ENCODE measurements at regions of chr7 and their contacts with region 1.

Region 1: DNA sequence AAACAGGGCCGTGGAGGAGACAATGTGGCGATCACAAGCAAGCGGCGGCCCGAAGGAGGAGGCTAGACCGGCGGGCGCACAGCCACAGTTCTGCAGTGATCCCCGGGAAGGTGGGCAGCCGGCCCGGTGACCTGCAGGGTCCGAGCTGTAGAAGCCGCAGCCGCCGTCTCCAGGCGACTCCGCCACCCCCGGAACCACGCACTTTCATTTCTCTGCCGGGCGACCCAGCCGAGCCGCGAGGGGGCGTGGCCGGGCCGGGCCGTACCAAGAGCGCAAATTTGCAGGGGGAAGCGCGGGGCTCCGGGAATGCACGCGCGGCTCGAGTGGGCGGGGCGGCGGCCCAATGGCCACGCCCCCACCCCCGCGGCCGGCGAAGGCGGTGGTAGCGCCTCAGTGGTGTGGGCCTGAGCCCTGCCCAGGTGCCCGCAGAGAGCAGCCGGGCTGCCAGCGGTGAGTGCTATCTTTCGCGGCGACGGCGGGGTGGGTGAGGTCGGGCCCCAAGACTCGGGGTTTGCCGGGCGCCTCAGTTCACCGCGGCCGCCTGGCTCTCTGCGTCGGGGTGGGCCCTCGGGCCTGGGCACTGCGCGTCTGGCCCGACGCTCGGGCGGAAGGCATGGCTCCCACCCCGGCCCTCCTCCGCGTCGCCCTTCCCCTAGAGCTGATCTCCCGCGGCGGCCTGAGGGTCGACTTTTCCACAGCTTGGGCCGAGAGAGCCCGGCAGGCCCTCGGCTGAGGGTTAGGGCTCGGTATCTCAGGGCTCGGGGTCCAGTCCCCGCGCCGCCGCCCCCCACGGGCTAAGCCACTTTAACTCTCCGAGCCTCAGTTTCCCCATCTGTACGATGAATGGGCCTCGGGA is at the start of gene POR:
- DNase-seq: peak; percentile 75 to 99
- H3K4me3 ChIP-seq: peak within 1 kb of the TSS; percentile 66 to 89 (median 74)
- H3K27ac ChIP-seq: peak within 1 kb of the TSS; percentile 27; the same call in 1 of the 2 replicates
- H3K4me1 ChIP-seq: peaks cover 0 to 12% (median 4%) of the 10 kb centered on the region in 4 experiments; a peak in 4 of 7 replicates
- H3K27me3 ChIP-seq: no peaks in the 10 kb centered on the region
- CTCF ChIP-seq: no peak
- EP300 ChIP-seq: peak in 1 of 2 experiments; percentile 100; a peak in 2 of 3 replicates
- POLR2A ChIP-seq: peak; percentile 100
- RAD21 ChIP-seq: peak in 1 of 2 experiments; percentile 7; a peak in 2 of 4 replicates
- total RNA-seq, gene POR: 127 and 144 TPM in 2 replicates

Region 2: GRCh38 chr7:75727881-75728592 is 186.9 kb before region 1 on chr7:
- CTCF ChIA-PET with region 1: no interaction called
- POLR2A ChIA-PET with region 1: no interaction called
- DNase-seq: peak in 1 of 2 experiments; percentile 55
- H3K4me3 ChIP-seq: no peak overlapping the region
- H3K27ac ChIP-seq: no peak overlapping the region
- H3K4me1 ChIP-seq: peaks cover 3 to 12% (median 6%) of the 10 kb centered on the region in 4 experiments
- H3K27me3 ChIP-seq: no peaks in the 10 kb centered on the region
- CTCF ChIP-seq: no peak
- EP300 ChIP-seq: no peak
- POLR2A ChIP-seq: no peak
- RAD21 ChIP-seq: no peak

Region 3: DNA sequence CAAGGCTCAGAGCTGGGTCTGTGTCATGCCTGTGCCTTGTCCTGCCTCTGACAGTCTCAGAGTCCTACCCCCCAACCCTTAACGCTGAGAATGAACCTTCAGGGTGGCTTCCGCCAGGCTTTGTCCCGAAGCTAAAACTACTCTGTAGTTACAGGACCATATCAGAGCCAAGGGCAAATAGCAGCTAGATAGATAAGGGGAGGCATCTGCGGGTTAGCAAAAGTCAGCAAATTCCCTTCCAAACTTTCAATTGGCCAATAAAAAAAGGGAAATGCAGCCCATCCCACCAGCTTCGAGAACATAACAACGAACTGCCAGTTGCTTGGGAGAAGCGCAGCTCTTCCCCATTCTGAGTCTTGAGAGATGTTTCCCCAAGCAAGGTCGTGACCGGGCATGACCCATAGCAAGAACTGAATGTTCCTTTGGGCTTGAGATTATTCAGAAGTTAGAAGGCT is 119.1 kb before region 1 on chr7:
- CTCF ChIA-PET with region 1: no interaction called
- POLR2A ChIA-PET with region 1: no interaction called
- DNase-seq: no peak
- H3K4me3 ChIP-seq: no peak overlapping the region
- H3K27ac ChIP-seq: no peak overlapping the region
- H3K4me1 ChIP-seq: no peaks in the 10 kb centered on the region; a peak in 1 of 7 replicates
- H3K27me3 ChIP-seq: no peaks in the 10 kb centered on the region
- CTCF ChIP-seq: no peak
- EP300 ChIP-seq: no peak
- POLR2A ChIP-seq: no peak
- RAD21 ChIP-seq: no peak

Region 4: DNA sequence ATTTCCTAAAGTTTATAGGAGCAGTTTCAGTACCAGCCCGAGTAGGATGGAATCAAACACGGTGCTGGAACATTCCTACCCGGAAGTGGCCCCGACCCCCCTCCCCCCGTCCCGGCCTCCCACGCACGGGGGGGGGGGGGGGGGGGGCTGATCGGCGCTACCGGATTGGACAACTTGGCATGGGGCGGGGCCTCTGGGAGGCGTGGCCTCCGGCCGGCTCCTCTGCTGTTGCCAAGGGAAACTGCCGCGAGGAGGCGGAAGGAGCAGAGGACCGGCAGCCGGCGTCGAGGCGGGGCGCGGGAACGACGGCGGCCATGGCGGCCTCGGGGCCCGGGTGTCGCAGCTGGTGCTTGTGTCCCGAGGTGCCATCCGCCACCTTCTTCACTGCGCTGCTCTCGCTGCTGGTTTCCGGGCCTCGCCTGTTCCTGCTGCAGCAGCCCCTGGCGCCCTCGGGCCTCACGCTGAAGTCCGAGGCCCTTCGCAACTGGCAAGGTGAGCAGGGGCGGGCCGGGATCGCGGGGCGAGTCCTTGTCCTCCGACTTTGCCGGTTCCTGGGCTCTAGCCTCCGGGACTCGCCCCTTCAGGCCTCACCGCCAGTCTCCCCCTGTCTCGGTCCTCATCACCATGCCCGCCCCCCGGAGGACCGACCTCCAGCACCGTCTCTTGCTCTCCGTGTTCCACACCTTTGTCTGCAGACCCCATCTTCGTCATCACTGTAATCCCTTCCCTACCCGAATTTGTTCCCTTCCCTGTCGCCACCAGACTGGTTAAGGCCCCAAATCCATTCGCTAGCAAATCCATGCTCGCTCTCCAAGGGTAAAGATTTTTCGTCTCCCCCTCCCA is 36.0 kb before region 1 on chr7 and contains the start of gene RHBDD2:
- CTCF ChIA-PET with region 1: no interaction called
- POLR2A ChIA-PET with region 1: interaction called, 12 read pairs
- DNase-seq: peak; percentile 70 to 94
- H3K4me3 ChIP-seq: peak within 1 kb of the TSS; percentile 73 to 97 (median 81)
- H3K27ac ChIP-seq: peak within 1 kb of the TSS; percentile 82
- H3K4me1 ChIP-seq: peaks cover 5 to 11% (median 9%) of the 10 kb centered on the region in 4 experiments
- H3K27me3 ChIP-seq: peaks cover 0 to 8% (median under 1%) of the 10 kb centered on the region in 4 experiments; a peak in 1 of 7 replicates
- CTCF ChIP-seq: peak in 1 of 3 experiments; percentile 13; a peak in 1 of 4 replicates
- EP300 ChIP-seq: no peak
- POLR2A ChIP-seq: peak; percentile 93 to 99
- RAD21 ChIP-seq: no peak
- total RNA-seq, gene RHBDD2: 28.3 and 29.5 TPM in 2 replicates

Region 5: GRCh38 chr7:75928331-75928909 is 13.5 kb after region 1 on chr7:
- CTCF ChIA-PET with region 1: interaction called, 3 read pairs
- POLR2A ChIA-PET with region 1: interaction called, 31 read pairs
- DNase-seq: no peak
- H3K4me3 ChIP-seq: no peak overlapping the region
- H3K27ac ChIP-seq: no peak overlapping the region
- H3K4me1 ChIP-seq: peaks cover 0 to 3% (median 0%) of the 10 kb centered on the region in 4 experiments; a peak in 1 of 7 replicates
- H3K27me3 ChIP-seq: no peaks in the 10 kb centered on the region
- CTCF ChIP-seq: no peak
- EP300 ChIP-seq: no peak
- POLR2A ChIP-seq: no peak
- RAD21 ChIP-seq: no peak

Region 6: DNA sequence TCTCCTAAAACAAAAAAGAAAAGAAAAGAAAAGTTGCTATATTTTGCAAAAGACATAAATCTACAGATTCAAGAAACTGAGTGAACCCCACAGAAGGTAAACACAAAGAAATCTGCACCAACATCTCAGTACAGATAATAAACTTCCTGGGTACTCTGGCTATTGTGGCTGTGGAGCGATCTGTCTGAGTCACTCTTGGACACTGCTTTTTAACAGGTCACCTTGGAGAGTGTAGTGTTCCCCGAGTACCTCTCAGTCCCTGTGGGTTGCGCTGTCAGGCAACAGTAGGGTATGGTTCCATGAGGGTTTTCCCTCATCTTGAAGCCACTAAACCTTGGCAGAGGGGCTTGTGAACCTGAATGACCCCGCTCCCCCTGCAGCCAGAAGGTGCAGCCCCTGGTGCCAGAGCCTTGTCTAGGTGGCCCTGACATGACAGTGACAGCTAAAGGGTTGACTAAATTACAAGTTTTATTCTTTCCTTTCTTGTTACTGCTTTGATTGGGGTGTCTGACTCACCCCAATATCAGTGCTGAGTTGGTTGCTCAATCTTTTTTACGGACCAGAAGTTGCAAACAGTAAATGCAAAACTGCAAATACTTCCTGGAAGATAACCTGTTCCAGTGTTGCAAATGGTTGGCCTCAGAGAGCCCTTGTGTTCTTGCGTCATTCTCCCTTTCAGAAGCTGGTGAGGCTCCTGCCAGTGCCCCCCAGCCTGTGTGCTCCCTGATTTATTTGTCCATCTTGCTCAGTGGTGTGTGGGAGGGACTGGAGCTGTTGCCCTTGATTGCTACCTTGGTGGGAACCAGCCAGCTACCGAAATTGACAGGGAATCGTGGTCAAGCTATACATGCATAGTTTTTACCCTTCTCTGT is 30.6 kb after region 1 on chr7:
- CTCF ChIA-PET with region 1: interaction called, 4 read pairs
- POLR2A ChIA-PET with region 1: interaction called, 12 read pairs
- DNase-seq: no peak
- H3K4me3 ChIP-seq: no peak overlapping the region
- H3K27ac ChIP-seq: no peak overlapping the region
- H3K4me1 ChIP-seq: no peaks in the 10 kb centered on the region; a peak in 1 of 7 replicates
- H3K27me3 ChIP-seq: no peaks in the 10 kb centered on the region
- CTCF ChIP-seq: peak in 1 of 3 experiments; percentile 11; a peak in 1 of 4 replicates
- EP300 ChIP-seq: no peak
- POLR2A ChIP-seq: no peak
- RAD21 ChIP-seq: peak in 1 of 2 experiments; percentile 31; a peak in 1 of 4 replicates

Region 7: DNA sequence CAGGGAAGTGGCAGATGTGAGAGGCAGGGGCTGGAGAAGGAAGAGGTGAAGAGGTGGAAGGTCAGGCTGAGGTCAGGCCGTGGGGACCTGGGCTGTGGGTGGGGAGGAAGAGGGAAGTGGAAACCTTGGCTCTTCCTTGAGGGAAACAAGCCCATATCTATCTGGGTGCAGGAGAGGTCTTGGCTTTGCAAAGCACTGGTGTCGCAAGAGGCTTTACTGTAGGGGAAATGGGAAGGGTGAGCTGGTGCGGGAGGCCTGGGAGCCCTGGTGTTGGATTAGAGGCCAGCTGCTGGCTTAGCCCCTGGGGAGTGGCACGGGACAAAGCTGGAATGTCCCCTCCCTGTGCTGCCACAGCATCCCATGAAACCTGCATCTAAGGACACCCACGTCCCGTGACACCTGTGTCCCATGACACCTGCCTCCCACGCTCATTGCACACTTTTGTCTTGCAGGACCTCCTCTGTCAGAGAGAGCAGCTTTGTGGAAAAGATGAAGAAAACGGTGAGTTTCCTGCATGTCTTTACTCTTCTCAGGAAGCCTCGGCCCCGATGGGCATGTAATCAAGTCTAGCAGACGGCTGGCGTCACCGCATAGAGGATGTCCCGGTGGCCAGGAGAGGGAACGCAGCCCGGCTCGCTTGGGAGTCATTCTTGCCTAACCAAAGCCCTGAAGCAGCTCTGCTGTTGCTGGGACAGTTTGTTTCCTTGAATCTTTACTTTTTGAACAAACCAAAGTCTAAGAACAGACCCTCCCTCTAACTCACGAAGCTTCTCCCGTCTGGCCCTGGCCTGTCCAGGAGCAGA is 57.2 kb after region 1 on chr7:
- CTCF ChIA-PET with region 1: interaction called, 6 read pairs
- POLR2A ChIA-PET with region 1: interaction called, 10 read pairs
- DNase-seq: no peak
- H3K4me3 ChIP-seq: no peak overlapping the region
- H3K27ac ChIP-seq: no peak overlapping the region
- H3K4me1 ChIP-seq: no peaks in the 10 kb centered on the region
- H3K27me3 ChIP-seq: no peaks in the 10 kb centered on the region
- CTCF ChIP-seq: peak; percentile 23 to 53 (median 46); a peak in 2 of 4 replicates
- EP300 ChIP-seq: no peak
- POLR2A ChIP-seq: no peak
- RAD21 ChIP-seq: peak; percentile 31 to 45; a peak in 3 of 4 replicates

Region 8: DNA sequence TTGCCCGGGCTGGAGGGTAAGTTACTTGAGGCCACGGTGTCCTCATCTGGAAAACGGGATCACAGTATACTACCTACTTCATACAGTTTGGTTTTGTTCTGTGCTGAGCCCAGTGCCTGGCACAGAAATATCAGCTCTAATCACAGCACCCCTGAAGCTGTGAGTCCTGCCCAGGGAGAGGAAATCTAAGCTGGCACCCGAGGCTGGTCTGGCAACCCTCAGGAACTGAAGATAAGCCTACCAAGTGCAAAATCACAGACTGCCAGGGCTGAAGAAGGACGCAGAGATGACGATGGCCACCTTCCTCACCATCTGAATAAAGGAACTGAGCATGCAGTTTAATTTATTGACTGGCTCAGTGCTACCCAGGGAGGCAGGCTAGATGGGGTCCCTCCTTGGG is 87.2 kb after region 1 on chr7:
- CTCF ChIA-PET with region 1: no interaction called
- POLR2A ChIA-PET with region 1: no interaction called
- DNase-seq: no peak
- H3K4me3 ChIP-seq: no peak overlapping the region
- H3K27ac ChIP-seq: no peak overlapping the region
- H3K4me1 ChIP-seq: no peaks in the 10 kb centered on the region
- H3K27me3 ChIP-seq: no peaks in the 10 kb centered on the region
- CTCF ChIP-seq: no peak
- EP300 ChIP-seq: no peak
- POLR2A ChIP-seq: no peak
- RAD21 ChIP-seq: no peak